Heart right ventricle (tissue), 16 donors: ENCODE measurements at regions of chr14 and their contacts with region 1.

Region 1: DNA sequence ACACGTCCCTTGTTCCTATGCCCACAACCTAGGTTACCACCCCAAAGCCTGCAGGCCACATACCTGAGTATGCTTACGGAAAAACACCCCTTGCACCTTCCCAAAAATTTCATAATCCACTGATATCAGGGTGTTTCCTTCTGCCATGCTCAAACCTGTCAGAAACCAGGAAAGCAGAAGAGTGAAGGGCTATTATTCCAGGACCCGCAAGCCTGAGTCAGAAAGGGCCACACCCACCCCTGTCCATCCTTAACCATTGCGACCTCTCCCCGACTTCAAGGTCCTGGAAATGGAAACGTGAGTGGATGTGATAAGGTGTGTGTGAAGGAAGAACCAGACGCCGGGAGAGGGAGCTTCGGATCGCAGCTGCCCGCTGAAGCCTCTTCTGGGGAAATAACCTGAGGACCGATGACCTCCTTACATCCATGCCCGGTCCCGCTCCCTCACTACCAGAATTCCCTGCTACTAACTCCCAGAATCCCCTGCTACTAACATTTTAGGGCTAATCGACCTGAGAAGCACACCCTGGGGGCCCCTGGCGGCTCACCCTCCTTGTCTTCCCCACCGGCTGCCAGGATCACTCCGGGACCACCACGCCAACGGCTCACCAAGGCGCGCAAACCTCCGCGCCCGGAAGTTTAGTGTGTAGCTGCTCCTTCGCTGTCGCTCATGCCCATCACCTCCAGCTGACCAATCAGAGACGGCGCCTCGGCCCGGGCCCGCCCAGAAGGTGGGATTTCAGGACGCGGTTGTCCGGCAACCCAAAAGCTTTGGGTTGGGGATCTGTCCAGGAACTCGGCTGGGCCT is at the start of gene ACYP1:
- DNase-seq: peak; percentile 92 to 94
- ATAC-seq: peak; percentile 91 to 98 (median 96)
- H3K4me3 ChIP-seq: peak within 1 kb of the TSS; percentile 47 to 94 (median 74)
- H3K27ac ChIP-seq: peak within 1 kb of the TSS in 9 of 10 donors; percentile 14 to 86 (median 72)
- H3K4me1 ChIP-seq: peaks cover 2 to 41% (median 25%) of the 10 kb centered on the region in 9 donors
- H3K27me3 ChIP-seq: no peaks in the 10 kb centered on the region
- CTCF ChIP-seq: peak in 1 of 9 donors; percentile 14
- total RNA-seq, gene ACYP1: 7.9 to 12.6 (median 10.0) TPM

Region 2: DNA sequence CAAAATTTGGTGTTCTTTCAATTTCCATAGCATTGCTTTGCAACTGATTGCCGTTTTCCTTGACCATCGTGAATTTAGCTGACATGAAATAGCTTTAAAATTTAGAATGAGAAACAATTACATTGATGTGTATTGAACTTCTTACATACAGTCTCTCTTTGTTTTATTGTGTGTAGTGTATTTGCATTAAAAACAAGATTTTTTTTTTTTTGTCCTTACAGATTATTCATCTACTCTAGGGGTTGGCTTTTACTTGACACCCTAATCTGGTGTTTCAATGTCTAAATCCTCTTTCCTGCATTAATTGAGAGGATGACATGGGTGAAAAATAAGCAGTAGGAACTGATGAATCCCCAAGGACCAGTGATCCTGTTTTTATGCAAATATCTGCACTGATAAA is 958.2 kb before region 1 on chr14:
- intact Hi-C with region 1: no loop called
- DNase-seq: no peak
- ATAC-seq: no peak
- H3K4me3 ChIP-seq: no peak overlapping the region
- H3K27ac ChIP-seq: no peak overlapping the region
- H3K4me1 ChIP-seq: no peaks in the 10 kb centered on the region
- H3K27me3 ChIP-seq: no peaks in the 10 kb centered on the region
- CTCF ChIP-seq: no peak

Region 3: DNA sequence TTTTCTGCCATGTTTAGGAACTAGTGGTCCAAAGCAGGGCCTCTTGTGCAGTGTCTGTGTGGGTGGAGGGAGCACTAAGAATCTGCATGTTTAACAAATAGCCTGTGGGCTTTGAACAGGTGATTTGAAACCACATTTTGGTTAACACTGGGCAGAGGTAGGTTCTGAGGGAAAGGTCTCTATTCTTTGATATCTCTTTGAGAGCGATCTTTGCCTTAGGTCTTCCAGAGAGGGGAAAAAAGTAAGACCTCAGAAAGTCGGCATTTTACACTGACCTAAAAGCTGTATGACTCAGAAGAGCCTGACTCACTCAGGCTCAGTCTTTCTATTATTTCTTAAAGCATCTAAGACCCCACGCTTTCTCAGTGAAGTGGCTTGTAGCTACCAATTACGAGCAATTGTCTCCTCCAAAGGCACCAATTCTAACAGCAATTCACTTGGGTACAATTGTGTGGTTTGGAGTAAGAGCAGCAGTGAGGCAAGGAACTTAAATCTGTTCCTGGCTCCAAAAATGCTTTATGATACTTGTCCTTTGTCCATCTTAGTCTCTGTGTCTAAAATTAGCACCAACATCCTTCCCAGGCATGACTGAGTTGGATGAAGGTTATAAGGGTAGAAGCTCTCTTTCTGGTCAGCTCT is 52.1 kb before region 1 on chr14:
- intact Hi-C with region 1: loop called in 3 of 10 experiments (anchors 5 to 10 kb)
- DNase-seq: no peak
- ATAC-seq: peak; percentile 53 to 78 (median 69)
- H3K4me3 ChIP-seq: no peak overlapping the region
- H3K27ac ChIP-seq: peak overlapping the region in 9 of 10 donors; percentile 20 to 78 (median 65)
- H3K4me1 ChIP-seq: peaks cover 3 to 40% (median 32%) of the 10 kb centered on the region in 9 donors
- H3K27me3 ChIP-seq: no peaks in the 10 kb centered on the region
- CTCF ChIP-seq: no peak